ENCODE measurements at regions of chr4 and their contacts with region 1.

Region 1: DNA sequence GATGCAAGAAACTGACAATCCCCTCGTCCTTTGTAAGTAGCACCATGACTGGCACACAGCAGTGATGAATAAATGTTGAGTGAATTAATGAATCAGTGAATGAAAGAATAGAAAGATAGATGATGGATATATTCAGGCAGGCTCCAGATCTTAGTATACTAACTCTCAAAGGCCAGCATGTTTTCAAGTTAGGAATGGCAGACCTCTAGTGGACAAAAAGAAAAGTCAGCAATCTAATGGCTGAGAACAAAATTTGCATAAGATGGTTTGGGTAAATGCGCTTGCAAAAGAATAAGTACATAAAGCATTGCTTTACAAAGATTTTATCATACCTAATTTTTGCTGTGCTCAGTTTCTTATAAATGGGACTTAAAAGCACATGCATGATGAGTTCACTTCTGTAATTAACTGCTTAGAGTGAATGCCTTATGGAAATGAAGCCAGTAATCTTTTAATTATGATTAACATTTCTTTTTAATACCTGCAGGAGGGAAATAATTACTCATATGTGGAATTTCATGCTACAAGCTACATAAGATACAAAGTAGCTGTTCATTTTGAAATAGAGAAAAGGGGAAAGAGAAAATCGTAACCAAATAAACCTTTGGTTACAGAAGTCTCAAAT is 126.9 kb upstream of the GPRIN3 start:
- DNase-seq: peak; percentile 24
- H3K4me3 ChIP-seq: no peak overlapping the region
- H3K27ac ChIP-seq: no peak overlapping the region
- H3K4me1 ChIP-seq: no peaks in the 10 kb centered on the region
- H3K27me3 ChIP-seq: no peaks in the 10 kb centered on the region
- CTCF ChIP-seq: peak; percentile 66 to 82

Region 2: GRCh38 chr4:89000844-89001360 is 433.6 kb before region 1 on chr4:
- CTCF ChIA-PET with region 1: no interaction called
- dilution Hi-C with region 1: no loop called
- in situ Hi-C with region 1: no loop called
- intact Hi-C with region 1: no loop called
- DNase-seq: peak; percentile 74
- H3K4me3 ChIP-seq: no peak overlapping the region
- H3K27ac ChIP-seq: no peak overlapping the region
- H3K4me1 ChIP-seq: no peaks in the 10 kb centered on the region
- H3K27me3 ChIP-seq: no peaks in the 10 kb centered on the region
- CTCF ChIP-seq: no peak

Region 3: DNA sequence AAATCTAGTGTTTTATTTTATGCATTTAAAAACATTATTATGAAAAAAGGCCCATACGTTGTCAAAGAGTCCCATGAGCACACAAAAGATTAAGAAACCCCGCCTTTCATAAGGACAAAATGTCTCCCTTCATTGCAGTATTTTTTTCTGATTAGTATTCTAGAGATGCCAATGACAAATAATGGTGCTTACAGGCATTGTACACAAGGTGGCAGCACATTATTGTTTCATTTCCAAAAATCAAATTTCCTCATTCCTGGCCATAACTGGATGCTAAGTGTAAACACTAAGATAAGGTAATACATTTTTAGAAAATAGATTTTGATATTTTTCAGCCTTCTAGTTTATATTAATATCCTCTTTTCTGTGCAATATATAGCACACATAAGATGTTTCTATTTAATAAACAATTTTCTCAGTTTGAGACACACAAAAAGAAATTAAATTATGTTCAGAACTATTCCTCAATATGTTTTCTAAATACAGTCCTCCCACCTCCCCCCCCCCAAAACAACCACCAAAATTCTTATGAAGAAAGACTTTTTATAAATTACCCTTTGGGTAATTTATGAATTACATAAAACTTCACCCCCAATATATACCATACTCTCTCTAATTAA is 275.5 kb before region 1 on chr4:
- CTCF ChIA-PET with region 1: interaction called, 3 read pairs
- dilution Hi-C with region 1: no loop called
- in situ Hi-C with region 1: loop called in 1 of 2 experiments (anchors 25 kb)
- intact Hi-C with region 1: loop called (anchors 1 kb)
- DNase-seq: peak; percentile 35
- H3K4me3 ChIP-seq: no peak overlapping the region
- H3K27ac ChIP-seq: no peak overlapping the region
- H3K4me1 ChIP-seq: no peaks in the 10 kb centered on the region
- H3K27me3 ChIP-seq: no peaks in the 10 kb centered on the region
- CTCF ChIP-seq: peak; percentile 69 to 76

Region 4: GRCh38 chr4:89226665-89227574 is 207.6 kb before region 1 on chr4:
- CTCF ChIA-PET with region 1: no interaction called
- dilution Hi-C with region 1: no loop called
- in situ Hi-C with region 1: loop called (anchors 10 kb)
- intact Hi-C with region 1: loop called (anchors 1 kb)
- DNase-seq: peak; percentile 82
- H3K4me3 ChIP-seq: peak overlapping the region; percentile 4 to 24 (median 5)
- H3K27ac ChIP-seq: peak overlapping the region; percentile 38
- H3K4me1 ChIP-seq: no peaks in the 10 kb centered on the region
- H3K27me3 ChIP-seq: no peaks in the 10 kb centered on the region
- CTCF ChIP-seq: peak; percentile 82 to 84

Region 5: DNA sequence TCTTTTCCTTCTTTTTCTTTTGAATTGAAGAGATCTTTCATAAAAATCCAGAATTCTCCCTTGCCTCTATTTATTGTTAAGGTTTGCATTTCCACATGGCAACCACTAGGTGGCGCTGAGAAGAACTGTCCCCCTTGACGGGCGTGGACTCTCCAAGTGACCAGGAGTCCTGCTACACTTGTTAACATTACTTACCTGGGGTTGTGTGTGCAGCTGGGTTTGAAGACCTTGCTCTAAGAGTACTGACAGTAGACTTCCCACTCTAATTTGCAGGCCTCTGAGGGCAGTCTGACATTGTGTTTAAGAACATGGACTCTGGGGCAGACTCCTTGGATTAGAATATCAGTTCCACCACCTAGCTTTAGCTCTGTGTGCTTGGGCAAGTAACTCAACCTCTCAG is 179.6 kb before region 1 on chr4:
- CTCF ChIA-PET with region 1: no interaction called
- dilution Hi-C with region 1: no loop called
- in situ Hi-C with region 1: no loop called
- intact Hi-C with region 1: loop called (anchors 1 kb)
- DNase-seq: peak; percentile 17
- H3K4me3 ChIP-seq: no peak overlapping the region
- H3K27ac ChIP-seq: no peak overlapping the region
- H3K4me1 ChIP-seq: no peaks in the 10 kb centered on the region
- H3K27me3 ChIP-seq: peaks cover 2% of the 10 kb centered on the region
- CTCF ChIP-seq: peak; percentile 78 to 84

Region 6: DNA sequence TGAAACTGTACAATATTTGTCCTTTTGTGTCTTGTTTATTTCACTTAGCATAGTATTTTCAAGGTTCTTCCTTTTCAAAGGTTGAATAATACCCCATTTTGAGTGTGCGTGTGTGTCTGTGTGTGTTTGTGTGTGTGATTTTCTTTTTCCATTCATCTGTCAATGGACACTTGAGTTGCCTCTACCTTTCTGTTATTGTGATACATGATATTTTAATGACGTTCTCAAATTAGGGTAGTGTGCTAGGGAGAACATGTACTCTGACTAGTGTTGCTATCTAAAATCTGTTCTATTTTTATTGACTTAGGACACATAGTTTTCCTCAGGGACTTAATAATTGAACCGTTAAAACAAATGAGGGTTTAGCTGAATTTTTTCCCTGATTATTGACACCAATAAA is 470.0 kb after region 1 on chr4:
- CTCF ChIA-PET with region 1: no interaction called
- dilution Hi-C with region 1: no loop called
- in situ Hi-C with region 1: no loop called
- intact Hi-C with region 1: loop called (anchors 5 kb)
- DNase-seq: no peak
- H3K4me3 ChIP-seq: no peak overlapping the region
- H3K27ac ChIP-seq: no peak overlapping the region
- H3K4me1 ChIP-seq: no peaks in the 10 kb centered on the region
- H3K27me3 ChIP-seq: peaks cover 2% of the 10 kb centered on the region
- CTCF ChIP-seq: no peak